Common myeloid progenitor, CD34-positive (primary cell): ENCODE measurements at regions of chr11 and their contacts with region 1.

Region 1: DNA sequence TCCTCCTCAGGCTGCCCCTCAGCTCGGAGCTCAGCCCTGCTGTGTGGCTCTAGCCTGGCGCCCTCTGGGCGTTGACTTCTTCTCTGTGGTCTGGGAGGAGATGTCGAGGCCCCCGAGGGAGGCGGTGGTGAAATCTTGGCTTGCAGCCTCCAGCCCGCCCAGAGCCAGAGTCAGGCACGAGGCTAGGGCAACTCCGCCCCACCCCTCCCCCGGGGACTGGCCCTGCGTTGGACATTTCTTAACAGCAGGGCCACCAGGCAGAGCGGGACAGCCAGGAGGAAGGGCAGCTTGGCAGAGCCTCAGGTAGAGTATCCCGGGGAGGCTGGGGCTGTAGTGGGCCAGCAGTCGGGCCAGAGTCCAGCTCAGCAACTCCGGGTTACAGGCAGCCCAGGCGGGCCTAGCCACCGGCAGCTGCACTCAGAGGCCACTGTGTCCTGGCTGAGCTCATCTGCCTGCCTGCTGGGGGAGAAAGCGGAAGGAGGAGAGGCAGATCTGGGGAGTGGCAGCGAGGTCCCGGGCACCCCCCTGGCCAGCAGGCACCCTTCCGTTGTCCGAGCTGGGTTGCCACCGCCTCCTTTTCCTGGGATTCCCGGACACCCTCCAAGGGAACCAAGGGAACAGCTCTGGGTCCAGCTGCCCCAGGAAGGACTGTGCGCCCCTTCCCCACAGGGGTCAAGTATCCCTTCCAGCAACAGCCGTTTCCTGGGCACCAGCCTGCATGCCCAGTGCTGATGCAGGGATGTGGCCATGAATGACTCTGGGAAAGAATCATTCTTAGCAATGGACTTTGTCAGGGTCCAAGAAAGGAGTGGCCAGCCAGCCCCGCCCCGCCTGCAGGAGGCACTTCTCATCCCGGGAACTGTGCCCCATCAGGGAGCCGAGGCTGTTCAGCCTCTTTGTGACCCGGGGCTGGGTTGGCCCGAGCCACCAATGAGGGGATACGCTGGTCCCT is at the start of gene ALDH3B1:
- DNase-seq: peak; percentile 57 to 84 (median 76)
- H3K4me3 ChIP-seq: peak within 1 kb of the TSS in 5 of 7 experiments; percentile 19 to 65 (median 48)
- H3K27ac ChIP-seq: peak within 1 kb of the TSS in 1 of 2 experiments; percentile 63
- H3K4me1 ChIP-seq: peaks cover 0 to 86% (median 69%) of the 10 kb centered on the region in 4 experiments
- H3K27me3 ChIP-seq: no peaks in the 10 kb centered on the region

Region 2: DNA sequence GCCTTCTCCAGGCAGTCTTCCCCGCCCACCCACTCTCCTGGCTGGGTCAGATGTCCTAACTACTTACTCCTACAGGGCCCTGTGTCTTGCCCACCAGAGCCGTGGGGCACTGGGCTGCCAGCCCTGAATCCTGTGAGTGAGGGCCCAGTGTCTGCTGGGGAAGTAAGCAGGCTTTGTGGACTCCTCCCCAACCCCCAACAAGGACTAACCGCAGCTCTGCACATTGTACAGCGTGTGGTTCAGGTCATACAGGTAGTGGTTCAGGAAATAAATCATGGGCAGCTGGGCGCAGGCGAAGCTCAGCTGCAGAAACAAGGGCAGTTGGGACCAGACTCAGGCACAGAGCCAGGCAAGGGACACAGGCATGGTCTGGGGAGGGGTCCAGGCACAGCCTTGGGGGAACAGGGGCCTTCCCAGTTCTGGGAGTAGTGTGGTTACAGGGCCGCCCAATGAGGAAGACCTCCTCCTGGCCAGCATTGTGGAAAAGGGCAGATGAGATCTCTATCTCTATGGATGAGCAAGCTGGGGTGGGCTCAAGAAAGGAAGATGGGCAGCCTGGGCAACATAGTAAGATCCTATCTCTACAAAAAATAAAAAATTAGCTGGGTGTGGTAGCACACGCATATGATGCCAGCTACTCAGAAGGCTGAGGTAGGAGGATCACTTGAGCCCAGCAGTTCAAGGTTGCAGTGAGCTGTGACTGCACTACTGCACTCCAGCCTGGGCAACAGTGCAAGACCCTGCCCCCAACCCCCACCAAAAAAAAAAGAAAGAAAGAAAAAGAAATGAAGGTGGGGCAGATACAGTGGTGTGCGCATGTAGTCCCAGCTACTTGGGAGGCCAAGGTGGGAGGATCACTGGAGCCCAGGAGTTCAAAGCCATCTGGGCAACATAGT is 12.0 kb before region 1 on chr11:
- CTCF ChIA-PET with region 1: interaction called, 10 read pairs
- POLR2A ChIA-PET with region 1: no interaction called
- DNase-seq: peak in 2 of 3 donors; percentile 66 to 78
- H3K4me3 ChIP-seq: no peak overlapping the region
- H3K27ac ChIP-seq: no peak overlapping the region
- H3K4me1 ChIP-seq: peaks cover 0 to 53% (median 22%) of the 10 kb centered on the region in 4 experiments
- H3K27me3 ChIP-seq: no peaks in the 10 kb centered on the region

Region 3: GRCh38 chr11:68020575-68020974 is 10.2 kb after region 1 on chr11:
- CTCF ChIA-PET with region 1: interaction called, 13 read pairs
- POLR2A ChIA-PET with region 1: interaction called, 4 read pairs
- DNase-seq: no peak
- H3K4me3 ChIP-seq: no peak overlapping the region
- H3K27ac ChIP-seq: no peak overlapping the region
- H3K4me1 ChIP-seq: no peaks in the 10 kb centered on the region
- H3K27me3 ChIP-seq: no peaks in the 10 kb centered on the region

Region 4: GRCh38 chr11:68038718-68039525 is 28.6 kb after region 1 on chr11 and contains the start of gene TCIRG1:
- CTCF ChIA-PET with region 1: interaction called, 25 read pairs
- POLR2A ChIA-PET with region 1: interaction called, 3 read pairs
- DNase-seq: peak in 2 of 3 donors; percentile 17 to 39
- H3K4me3 ChIP-seq: peak within 1 kb of the TSS; percentile 31 to 82 (median 72)
- H3K27ac ChIP-seq: peak within 1 kb of the TSS; percentile 54 to 87
- H3K4me1 ChIP-seq: peaks cover 7 to 71% (median 62%) of the 10 kb centered on the region in 4 experiments
- H3K27me3 ChIP-seq: no peaks in the 10 kb centered on the region